Left colon (tissue), 2 donors: ENCODE measurements at regions of chrX and their contacts with region 1.

Region 1: DNA sequence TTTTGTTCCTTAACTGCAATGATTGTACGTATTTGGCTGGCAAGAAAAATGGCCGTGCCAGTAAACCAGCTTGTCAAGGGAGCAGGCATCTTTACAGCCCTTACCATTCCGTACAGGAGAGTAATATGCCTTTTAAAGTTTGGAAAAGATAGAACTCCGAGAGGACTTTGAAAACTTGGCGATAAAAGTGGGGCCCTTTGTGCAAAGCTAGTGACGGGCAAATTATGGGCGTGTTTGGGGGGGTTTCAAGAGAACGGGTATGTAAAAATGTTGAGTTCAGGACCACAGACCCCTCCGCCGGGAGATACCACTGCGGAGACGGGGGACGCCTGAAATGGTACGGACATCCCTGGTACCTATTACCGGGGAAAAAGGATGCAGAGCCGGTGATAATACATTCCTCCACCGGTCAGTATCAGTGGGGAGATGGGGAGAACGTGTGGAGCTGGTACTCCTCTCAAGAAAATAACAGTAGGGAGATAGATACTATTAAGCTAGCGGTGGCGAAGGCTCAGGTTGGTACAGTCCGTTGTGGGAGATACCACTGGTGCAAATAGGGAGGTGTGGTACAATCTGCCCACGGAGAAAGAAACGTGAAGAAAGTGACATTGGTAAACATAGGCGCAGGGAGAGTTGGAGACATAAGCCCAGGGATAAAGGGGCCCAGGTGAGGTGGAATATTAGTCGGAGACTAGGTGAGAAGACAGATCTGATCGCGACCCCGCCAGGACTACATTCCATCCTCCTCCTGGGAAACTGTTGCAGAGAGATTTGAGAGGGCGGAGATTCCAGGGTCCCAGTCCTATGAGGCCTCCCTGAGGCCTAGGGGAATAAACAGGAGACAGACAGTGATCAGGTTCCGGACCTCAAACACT is 14.5 kb downstream of the SPACA5 start:
- DNase-seq: peak; percentile 66 to 85
- ATAC-seq: peak; percentile 81

Region 2: DNA sequence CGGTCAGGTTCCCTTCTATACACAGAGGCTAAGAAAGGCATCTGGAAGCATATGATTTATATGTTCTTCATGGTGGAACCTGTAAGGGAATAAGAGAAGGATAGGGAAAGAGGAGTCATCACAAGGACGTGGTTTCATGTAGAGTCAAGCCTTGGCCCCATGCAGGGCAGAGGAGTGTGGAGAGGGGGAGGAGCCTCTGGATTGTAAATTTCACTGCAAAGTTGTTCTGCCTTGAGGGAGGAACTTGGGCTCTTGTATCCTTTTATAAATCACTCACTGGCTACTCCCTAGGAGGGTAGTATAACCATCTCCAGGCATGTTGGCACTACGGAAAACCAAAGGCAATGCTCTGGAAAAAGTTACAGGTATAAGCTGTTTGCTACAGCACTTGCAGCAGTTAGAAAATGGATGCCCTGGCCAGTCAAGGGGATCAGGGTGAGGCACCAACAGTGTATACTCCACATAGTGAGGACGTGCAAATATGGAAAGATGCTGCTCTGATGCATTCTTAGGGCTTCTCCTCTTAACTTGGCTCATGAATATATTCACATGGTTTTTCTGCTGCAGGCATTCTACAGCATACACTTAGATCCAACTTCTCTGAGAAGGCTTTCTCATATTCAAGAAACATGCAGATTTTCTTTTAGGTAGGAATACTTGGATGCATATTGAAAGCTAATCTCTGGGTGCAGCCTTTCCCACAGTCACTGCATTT is 244.8 kb before region 1 on chrX:
- intact Hi-C with region 1: no loop called
- DNase-seq: no peak
- ATAC-seq: peak; percentile 68

Region 3: DNA sequence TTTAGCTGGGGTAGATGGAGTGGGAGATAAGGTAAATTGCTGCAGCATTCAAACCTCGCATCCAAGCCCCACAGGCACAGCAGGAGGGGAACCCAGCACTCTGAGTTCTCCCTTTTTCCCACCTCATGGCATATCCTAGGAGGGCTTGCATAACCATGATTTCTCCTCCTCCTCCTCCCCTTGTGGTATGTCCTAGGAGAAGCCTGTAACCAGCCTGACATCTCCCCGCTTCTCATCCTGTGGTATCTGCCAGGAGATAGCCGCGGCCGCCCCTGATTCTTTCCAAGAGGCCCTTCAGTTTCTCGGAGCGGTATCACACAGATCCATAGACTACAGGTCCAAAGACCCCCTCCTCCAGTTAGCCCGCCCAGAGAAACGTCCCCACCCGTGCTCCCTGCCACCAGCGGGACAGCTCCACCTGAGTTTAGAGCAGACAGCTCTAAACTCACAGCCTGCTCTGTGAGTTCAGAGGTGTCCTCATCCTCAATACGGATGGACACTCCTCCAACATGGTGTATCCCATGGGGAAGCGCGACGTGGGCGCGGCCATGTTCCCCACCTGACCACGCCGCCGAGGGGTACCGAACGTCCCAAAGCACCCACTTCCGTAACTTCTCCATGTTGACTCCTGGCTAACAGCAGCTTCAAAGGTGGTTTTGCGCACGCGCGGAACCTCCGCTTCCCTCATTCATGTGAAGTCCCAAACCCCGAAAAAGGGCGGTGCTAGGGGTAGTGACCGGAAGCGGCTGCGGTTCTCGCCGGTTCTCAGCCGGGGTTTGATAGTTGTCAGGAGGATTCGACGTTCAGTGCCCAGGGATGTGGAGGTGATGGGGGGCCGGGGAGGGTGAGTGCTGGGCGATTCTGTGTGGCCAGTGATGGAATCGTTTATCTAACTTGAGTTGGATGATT is 184.8 kb before region 1 on chrX and contains the start of gene ZNF81:
- intact Hi-C with region 1: loop called in 1 of 2 experiments (anchors 10 kb)
- DNase-seq: peak; percentile 95 to 96
- ATAC-seq: peak; percentile 96
- total RNA-seq, gene ZNF81: 11.8 to 12.0 TPM

Region 4: DNA sequence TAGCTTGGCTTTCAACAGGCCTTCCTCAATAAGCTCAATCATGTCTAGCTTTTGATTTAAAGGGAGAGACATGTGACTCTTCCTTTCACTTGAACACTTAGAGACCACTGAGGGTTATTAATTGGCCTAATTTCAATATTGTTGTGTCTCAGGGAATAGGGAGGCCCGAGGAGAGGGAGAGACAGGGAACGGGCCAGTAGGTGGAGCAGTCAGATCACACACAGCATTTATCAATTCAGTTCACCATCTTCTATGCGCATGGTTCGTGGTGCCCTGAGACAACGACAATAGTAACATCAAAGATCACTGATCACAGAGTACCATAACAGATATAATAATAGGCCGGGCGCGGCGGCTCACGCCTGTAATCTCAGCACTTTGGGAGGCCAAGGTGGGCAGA is 166.8 kb before region 1 on chrX:
- intact Hi-C with region 1: loop called in 1 of 2 experiments (anchors 10 kb)
- DNase-seq: peak in 1 of 2 donors; percentile 57
- ATAC-seq: peak; percentile 92

Region 5: DNA sequence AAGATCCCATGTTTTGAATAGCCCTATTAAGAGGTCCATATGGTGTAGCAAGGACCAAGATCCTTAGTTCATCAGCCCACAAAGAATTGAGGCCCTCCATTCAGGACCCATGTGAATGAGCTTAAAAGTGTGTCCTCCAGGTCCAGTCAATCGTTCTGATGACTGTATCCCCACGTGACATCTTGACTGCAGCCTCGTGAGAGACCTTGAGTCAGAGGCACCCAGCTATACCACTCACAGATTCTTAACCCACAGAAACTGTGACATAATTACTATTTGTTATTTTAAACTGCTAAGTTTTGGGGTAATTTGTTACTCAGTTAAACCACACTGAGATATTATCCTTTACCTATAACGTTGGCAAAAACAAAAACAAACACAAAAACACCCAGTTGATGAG is 79.8 kb before region 1 on chrX:
- intact Hi-C with region 1: no loop called
- DNase-seq: no peak
- ATAC-seq: no peak